Natural killer cell (primary cell): ENCODE measurements at regions of chr1 and their contacts with region 1.

Region 1: DNA sequence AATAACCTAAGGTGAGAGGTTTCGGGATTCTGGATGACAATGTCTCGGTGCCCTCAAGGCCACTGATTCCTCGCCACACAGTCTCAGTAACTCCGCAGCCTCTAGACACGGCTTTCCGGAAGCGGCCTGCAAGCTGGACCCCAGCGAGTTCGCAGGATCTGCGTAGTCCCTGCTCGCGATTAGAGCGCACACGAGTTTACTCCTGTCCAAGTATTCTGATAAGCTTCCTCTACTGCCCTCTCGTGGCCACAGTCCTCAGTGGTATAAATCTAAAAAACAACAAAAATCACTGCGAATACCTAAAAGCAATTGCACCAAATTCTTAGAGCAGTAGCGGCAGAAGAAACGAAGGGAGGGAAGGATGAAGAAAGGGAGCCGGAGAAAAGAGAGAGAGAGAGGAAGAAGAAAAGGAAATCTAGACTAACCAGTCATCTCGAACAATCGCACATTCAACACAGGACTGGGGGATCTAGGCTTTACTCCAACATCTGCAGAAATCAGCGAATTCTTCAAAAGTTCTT is 1.1 kb upstream of the PLXNA2 start:
- DNase-seq: peak; percentile 71 to 88
- ATAC-seq: peak; percentile 77 to 86 (median 79)
- H3K4me3 ChIP-seq: peak overlapping the region; percentile 37
- H3K4me3 Mint-ChIP-seq: peak overlapping the region; percentile 91
- H3K27ac ChIP-seq: peak overlapping the region; percentile 38
- H3K27ac Mint-ChIP-seq: peak overlapping the region; percentile 17 to 62
- H3K4me1 ChIP-seq: peaks cover 18% of the 10 kb centered on the region
- H3K4me1 Mint-ChIP-seq: peaks cover 10 to 28% of the 10 kb centered on the region in 2 donors
- H3K27me3 ChIP-seq: peaks cover 21% of the 10 kb centered on the region
- H3K27me3 Mint-ChIP-seq: peaks cover 14 to 22% of the 10 kb centered on the region in 2 donors
- CTCF ChIP-seq: peak; percentile 84

Region 2: DNA sequence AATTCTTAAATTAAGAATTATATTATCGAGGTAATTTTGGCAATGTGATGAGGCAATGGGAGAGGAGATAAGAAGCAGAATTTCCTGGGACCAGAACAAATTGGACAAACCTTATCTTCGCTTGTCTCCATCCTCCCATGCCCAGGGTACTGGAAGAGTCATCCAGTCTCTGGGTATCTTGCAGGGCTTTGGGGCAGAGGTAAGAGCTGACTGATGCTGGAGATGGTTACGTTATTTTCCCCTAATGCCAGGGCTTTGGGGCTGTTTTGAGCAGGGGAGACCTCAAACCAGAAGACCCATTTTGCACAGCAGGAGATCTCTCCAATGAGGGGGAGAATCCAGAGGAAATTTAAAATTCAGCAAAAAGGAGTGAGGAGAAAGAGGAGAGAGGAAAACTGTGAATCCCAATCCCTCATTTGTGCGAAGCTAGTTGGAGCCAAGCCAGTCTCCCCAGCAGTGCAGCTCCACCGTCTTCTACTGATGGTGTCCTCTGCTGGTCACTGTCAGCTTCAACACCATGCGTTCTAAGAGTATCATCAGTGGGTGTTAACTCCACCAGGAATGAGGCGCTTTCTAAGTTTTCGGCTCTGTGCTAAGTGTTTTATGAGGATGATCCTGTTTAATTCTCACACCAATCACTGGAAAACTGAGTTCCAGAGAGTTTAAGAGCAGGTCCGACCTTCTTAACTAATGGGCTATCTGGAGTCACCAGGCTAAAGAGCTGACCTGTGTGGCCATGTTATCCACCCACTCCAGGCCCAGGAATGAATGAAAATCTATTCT is 247.6 kb before region 1 on chr1:
- intact Hi-C with region 1: no loop called
- DNase-seq: peak in 1 of 2 donors; percentile 71
- ATAC-seq: peak; percentile 75 to 94 (median 81)
- H3K4me3 ChIP-seq: no peak overlapping the region
- H3K4me3 Mint-ChIP-seq: no peak overlapping the region
- H3K27ac ChIP-seq: no peak overlapping the region
- H3K27ac Mint-ChIP-seq: no peak overlapping the region
- H3K4me1 ChIP-seq: no peaks in the 10 kb centered on the region
- H3K4me1 Mint-ChIP-seq: no peaks in the 10 kb centered on the region
- H3K27me3 ChIP-seq: no peaks in the 10 kb centered on the region
- H3K27me3 Mint-ChIP-seq: peaks cover 12 to 17% of the 10 kb centered on the region in 2 donors
- CTCF ChIP-seq: peak; percentile 76

Region 3: DNA sequence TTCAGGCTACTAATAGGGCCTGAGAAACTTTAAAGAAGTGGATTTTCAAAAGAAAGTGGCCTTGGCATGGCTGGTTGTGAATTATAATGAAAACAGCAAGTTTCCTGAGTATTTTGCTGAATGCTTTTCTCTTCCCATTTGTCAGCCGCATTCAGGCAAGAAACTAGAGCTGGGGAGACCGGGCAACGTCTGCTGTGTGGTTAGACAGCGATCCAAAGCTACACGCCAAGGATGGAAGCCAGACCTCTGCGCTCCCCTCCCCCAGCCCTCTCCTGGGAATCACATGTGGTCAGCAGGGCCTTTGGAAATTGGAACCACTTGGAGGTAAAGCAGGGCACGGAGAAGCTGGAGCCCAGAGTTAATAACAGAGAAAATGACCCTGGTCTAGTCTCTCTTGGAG is 220.2 kb before region 1 on chr1:
- intact Hi-C with region 1: loop called (anchors 1 kb)
- DNase-seq: no peak
- ATAC-seq: no peak
- H3K4me3 ChIP-seq: no peak overlapping the region
- H3K4me3 Mint-ChIP-seq: no peak overlapping the region
- H3K27ac ChIP-seq: no peak overlapping the region
- H3K27ac Mint-ChIP-seq: no peak overlapping the region
- H3K4me1 ChIP-seq: no peaks in the 10 kb centered on the region
- H3K4me1 Mint-ChIP-seq: no peaks in the 10 kb centered on the region
- H3K27me3 ChIP-seq: no peaks in the 10 kb centered on the region
- H3K27me3 Mint-ChIP-seq: peaks cover 0 to 2% of the 10 kb centered on the region in 2 donors
- CTCF ChIP-seq: no peak

Region 4: DNA sequence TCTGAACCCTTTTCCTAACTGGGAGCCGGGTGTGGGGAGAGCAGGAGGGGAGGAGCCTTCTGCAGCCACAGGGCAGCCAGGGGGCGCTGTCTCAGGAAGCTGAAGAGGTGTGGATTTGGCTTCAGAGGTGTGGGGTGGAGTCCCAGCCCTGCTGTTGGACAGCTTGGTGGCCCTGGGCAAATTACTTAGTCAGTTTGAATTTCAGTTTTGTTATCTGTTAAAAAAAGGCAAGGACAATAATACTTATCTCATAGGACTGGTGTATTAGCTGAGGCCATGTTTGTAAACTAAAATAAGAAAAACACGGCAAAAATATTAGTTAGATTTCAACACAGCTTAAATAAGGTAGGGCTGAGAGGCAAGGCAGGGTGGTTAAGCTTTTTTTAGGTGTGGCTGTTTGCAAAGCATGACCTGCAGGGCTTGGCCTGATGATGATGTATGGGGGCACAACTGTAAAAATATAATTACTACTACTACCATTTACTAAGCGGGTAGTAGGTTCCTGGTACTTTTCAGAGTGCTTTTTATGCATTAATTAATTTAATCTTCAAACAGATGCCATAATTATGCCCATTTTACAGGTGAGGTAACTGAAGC is 112.9 kb before region 1 on chr1:
- intact Hi-C with region 1: loop called (anchors 1 kb)
- DNase-seq: peak; percentile 18 to 62
- ATAC-seq: peak; percentile 52 to 75 (median 52)
- H3K4me3 ChIP-seq: no peak overlapping the region
- H3K4me3 Mint-ChIP-seq: no peak overlapping the region
- H3K27ac ChIP-seq: no peak overlapping the region
- H3K27ac Mint-ChIP-seq: no peak overlapping the region
- H3K4me1 ChIP-seq: peaks cover 3% of the 10 kb centered on the region
- H3K4me1 Mint-ChIP-seq: peaks cover 0 to 7% of the 10 kb centered on the region in 2 donors
- H3K27me3 ChIP-seq: no peaks in the 10 kb centered on the region
- H3K27me3 Mint-ChIP-seq: peaks cover 7 to 26% of the 10 kb centered on the region in 2 donors
- CTCF ChIP-seq: peak; percentile 58